Activated CD4-positive, alpha-beta memory T cell treated with anti-CD3 and anti-CD28 coated beads for 36 hours (primary cell): ENCODE measurements at regions of chr3 and their contacts with region 1.

Region 1: DNA sequence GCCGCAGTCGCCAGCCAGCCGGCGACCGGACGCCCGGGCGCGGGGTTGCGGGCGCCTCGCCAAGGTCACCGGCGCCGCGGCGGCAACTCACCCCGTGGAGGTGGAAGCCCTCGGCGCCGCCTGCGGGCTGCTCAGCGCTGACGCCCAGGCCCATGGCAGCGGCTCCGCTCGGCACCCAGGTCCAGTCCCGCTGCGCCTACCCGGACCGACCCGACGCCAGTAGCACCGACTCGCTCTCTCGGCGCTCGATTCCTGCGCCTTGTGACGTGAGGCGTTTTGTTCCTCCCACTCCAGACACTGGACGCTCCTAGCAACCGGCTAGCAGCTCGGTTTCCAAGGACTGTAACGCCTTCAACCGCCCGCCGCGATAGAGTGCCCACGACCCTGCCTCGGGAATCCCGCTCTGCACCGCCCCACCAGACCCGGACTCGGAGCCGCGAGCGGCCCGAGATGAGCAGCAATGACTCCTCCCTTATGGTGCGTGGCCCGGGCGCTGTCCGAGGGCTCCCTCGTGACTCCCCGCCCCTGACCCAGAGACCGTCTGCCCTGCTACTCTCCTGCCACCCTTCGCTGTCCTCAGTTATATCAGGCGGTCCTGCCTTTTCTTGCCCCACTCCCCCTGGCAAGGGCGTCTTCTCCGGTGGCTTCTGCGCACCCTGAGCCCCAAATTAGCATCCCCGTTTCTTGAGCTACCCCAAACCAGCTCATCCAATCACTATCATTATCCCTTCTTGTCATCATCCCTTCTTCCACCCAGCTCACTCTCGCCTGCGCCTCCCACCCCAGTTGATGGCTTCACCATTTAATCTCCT is at the starts of genes GORASP1 and TTC21A:
- DNase-seq: peak; percentile 83
- H3K4me3 Mint-ChIP-seq: peak within 1 kb of the TSS; percentile 81
- H3K27ac Mint-ChIP-seq: peak within 1 kb of the TSS; percentile 74
- H3K4me1 Mint-ChIP-seq: peaks cover 42% of the 10 kb centered on the region
- H3K27me3 Mint-ChIP-seq: no peaks in the 10 kb centered on the region
- total RNA-seq, gene GORASP1: 32.7 to 34.1 TPM
- total RNA-seq, gene TTC21A: 1.7 to 1.8 TPM

Region 2: DNA sequence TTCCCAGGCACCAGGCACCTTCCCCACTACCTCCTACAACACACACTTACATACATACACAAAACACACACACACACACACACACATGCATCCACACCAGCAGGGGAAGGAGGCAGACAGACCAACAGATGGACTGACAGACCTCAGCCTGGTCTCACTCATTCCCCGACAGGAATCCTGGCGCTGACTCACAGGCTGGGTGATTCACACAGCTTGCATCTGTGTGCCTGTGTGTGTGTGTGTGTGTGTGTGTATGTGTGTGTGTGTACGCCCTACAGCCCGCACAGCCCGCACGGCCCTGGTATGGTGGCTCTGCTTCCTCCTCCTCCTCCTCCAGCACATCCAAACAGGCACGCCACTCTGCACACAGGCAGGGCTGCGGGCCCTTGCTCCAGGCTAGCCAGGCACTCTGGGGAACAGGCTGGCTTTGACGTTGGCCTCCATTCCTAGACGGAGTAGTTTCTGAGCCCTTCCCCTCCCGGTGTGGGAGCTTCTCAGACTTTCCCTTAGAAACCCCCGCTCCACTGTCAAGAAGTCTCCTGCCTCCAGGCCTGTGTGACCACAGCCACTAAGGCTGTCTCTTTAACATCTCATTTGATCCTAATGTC is 39.5 kb after region 1 on chr3:
- CTCF ChIA-PET with region 1: no interaction called
- POLR2A ChIA-PET with region 1: interaction called, 7 read pairs
- intact Hi-C with region 1: loop called (anchors 1 kb)
- DNase-seq: peak; percentile 90
- H3K4me3 Mint-ChIP-seq: peak overlapping the region; percentile 92
- H3K27ac Mint-ChIP-seq: peak overlapping the region; percentile 97
- H3K4me1 Mint-ChIP-seq: peaks cover 70% of the 10 kb centered on the region
- H3K27me3 Mint-ChIP-seq: no peaks in the 10 kb centered on the region

Region 3: GRCh38 chr3:39383045-39383880 is 275.7 kb after region 1 on chr3 and contains the start of gene SLC25A38:
- CTCF ChIA-PET with region 1: no interaction called
- POLR2A ChIA-PET with region 1: interaction called, 4 read pairs
- intact Hi-C with region 1: loop called (anchors 1 kb)
- DNase-seq: peak; percentile 89
- H3K4me3 Mint-ChIP-seq: peak within 1 kb of the TSS; percentile 93
- H3K27ac Mint-ChIP-seq: peak within 1 kb of the TSS; percentile 97
- H3K4me1 Mint-ChIP-seq: peaks cover 36% of the 10 kb centered on the region
- H3K27me3 Mint-ChIP-seq: no peaks in the 10 kb centered on the region
- total RNA-seq, gene SLC25A38: 23.1 to 24.9 TPM